ENCODE measurements at regions of chrX and their contacts with region 1.

Region 1: GRCh38 chrX:55135171-55135570 is 46.4 kb downstream of the PAGE2 start:
- DNase-seq: peak; percentile 50
- H3K4me3 ChIP-seq: no peak overlapping the region
- H3K27ac ChIP-seq: no peak overlapping the region
- H3K4me1 ChIP-seq: no peaks in the 10 kb centered on the region
- H3K27me3 ChIP-seq: no peaks in the 10 kb centered on the region
- CTCF ChIP-seq: peak; percentile 45

Region 2: GRCh38 chrX:55342533-55343501 is 207.6 kb after region 1 on chrX:
- intact Hi-C with region 1: loop called (anchors 10 kb)
- DNase-seq: peak; percentile 53
- H3K4me3 ChIP-seq: no peak overlapping the region
- H3K27ac ChIP-seq: no peak overlapping the region
- H3K4me1 ChIP-seq: no peaks in the 10 kb centered on the region
- H3K27me3 ChIP-seq: no peaks in the 10 kb centered on the region
- CTCF ChIP-seq: peak; percentile 50